RWPE1 (cell line): ENCODE measurements at regions of chr6 and their contacts with region 1.

Region 1: DNA sequence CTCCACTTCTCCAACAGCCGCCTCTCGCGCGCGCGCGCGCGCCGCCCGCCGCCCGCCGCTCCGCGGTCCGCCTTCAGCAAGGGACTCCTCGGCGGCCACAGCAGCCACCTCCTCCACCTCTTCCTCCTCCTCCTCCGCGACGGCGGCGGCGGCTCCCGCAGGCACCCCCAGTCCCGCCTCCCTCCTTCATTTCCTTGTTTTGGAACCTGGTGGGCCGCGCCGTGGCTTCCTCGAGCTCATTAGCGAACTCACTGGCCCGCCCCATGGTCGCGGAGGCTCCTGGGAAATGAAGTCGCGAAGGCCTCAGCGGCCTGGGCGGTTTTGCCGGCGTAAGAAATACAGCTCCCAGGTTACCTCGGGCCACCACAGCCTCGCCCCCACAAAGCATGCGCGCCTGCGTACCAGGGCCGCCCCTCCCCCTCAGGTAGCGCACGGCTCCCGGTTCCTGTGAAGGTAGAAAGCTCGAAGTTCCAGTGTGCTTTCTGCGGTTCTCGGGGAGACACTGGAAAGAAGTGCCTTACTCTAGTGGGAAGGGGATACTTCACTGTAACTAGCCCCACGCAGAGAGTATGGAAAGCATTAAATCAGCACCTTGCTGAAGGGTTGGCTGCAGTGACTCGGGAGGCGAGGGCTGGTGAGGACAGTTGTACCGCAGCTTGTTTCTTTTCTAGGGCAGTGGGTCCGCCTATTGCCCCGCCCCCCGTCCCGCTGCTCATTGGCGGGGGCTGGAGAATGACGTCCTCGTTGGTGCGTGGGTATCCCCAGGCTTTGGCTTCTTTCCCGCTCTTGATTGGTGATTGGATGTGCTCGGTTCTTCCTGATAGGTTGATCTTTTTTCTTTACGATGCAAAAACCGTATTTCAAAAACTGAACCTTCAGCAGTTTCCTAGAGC is at the start of gene CDK19:
- DNase-seq: peak; percentile 98
- H3K27ac ChIP-seq: peak within 1 kb of the TSS; percentile 95
- CTCF ChIP-seq: no peak

Region 2: DNA sequence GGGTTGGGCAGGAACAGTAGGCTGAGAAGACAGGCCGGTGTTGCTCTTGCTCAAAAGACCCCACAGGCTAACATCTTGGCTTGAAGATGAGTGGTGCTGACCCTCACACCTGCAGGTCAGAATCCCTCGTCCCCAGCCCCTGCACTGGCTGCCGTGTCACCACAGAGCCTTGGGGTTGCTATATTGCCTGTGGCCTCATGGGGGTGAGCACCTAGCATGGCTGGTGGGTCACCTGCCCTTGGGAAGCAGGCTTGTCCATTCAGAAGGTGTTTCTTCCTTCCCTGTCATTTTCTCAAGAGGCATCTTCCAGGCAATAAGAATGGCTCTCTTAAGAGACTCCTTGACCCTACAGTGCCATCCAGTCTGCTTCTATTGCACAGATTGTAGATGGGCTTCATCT is 346.7 kb before region 1 on chr6:
- CTCF ChIA-PET with region 1: no interaction called
- POLR2A ChIA-PET with region 1: no interaction called
- DNase-seq: no peak
- H3K27ac ChIP-seq: no peak overlapping the region
- CTCF ChIP-seq: no peak

Region 3: GRCh38 chr6:110873981-110874879 is 58.8 kb after region 1 on chr6 and contains the start of gene AMD1:
- CTCF ChIA-PET with region 1: interaction called, 4 read pairs
- POLR2A ChIA-PET with region 1: interaction called, 15 read pairs
- DNase-seq: peak; percentile 99
- H3K27ac ChIP-seq: peak within 1 kb of the TSS; percentile 92
- CTCF ChIP-seq: no peak